Activated T-helper 2 cell treated with anti-CD3 and anti-CD28 coated beads, Interferon-gamma antibody, Interleukin-2, Interleukin-4, amounts not matched to agents 10 μg/mL and 5 μg/mL and 100 μg/mL, durations not matched to agents 14 hours and 24 hours and 36 hours (primary cell): ENCODE measurements at regions of chr3 and their contacts with region 1.

Region 1: GRCh38 chr3:100316641-100317069 is 17.9 kb upstream of the NIT2 start:
- DNase-seq: no peak
- H3K4me3 Mint-ChIP-seq: no peak overlapping the region
- H3K27ac Mint-ChIP-seq: peak overlapping the region; percentile 51
- H3K4me1 Mint-ChIP-seq: peaks cover 12% of the 10 kb centered on the region
- H3K27me3 Mint-ChIP-seq: no peaks in the 10 kb centered on the region

Region 2: DNA sequence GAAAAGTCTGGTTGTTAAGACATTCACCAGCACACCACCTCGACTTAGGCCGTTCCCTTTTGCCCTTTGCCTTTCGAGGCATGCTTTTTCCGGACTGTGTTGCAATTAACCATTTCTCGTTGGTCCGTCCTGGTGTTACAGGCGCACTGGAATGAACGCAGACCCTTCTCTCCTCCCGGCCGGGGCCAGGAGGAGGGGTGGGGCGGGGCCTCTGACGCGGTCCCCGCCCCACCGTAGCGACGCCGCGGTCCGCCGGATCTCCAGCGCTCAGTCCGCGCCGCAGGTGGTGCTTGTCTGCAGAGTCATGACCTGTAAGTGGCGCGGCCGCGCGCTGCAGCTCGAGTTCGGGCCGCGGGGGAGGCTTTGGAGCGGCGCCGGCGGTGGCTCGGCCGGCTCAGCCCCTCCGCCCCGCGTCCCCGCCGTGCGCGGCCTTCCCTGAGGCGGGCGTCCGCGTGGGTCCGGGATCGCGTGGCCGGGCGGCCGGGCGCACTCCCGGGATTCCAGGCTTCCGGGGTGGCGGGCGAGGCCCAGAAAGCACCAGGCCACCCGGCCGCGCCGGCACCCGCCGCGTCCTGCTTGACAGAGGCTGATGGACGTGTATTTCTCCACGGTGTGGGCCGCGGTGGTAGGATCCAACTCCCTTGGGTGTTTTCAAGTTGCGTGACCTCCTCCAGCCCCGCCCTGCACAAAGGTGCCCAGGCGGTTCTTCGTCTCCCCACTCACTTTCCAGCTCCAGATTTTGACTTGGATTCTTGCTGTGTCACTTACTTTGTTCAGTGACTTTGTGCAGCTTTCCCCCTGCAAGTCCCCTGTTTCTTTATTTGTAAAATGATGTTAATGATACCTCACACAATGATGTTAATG is 18.1 kb after region 1 on chr3 and contains the start of gene NIT2:
- intact Hi-C with region 1: loop called (anchors 2 kb)
- DNase-seq: peak; percentile 74
- H3K4me3 Mint-ChIP-seq: peak within 1 kb of the TSS; percentile 99
- H3K27ac Mint-ChIP-seq: peak within 1 kb of the TSS; percentile 99
- H3K4me1 Mint-ChIP-seq: peaks cover 18% of the 10 kb centered on the region
- H3K27me3 Mint-ChIP-seq: no peaks in the 10 kb centered on the region
- total RNA-seq, gene NIT2: 73.0 and 73.7 TPM in 2 replicates

Region 3: DNA sequence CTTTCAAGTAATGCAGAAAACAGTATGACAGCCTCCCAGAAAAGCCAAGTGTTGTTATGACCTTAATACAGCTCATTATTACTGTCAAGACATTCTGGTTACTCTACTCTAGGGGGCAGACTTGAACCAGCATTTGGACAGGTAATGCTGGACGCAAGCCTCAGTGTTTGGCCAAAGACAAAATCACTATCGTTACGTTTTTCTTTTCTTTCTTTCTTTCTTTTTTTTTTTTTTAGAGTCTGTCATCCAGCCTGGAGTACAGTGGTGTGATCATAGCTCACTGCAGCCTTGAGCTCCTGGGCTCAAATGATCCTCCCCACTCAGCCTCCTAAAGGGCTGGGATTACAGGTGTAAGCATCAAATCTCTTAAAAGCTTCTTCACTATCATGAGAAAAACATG is 146.3 kb after region 1 on chr3:
- intact Hi-C with region 1: loop called (anchors 5 kb)
- DNase-seq: no peak
- H3K4me3 Mint-ChIP-seq: no peak overlapping the region
- H3K27ac Mint-ChIP-seq: no peak overlapping the region
- H3K4me1 Mint-ChIP-seq: peaks cover 7% of the 10 kb centered on the region
- H3K27me3 Mint-ChIP-seq: peaks cover 2% of the 10 kb centered on the region

Region 4: DNA sequence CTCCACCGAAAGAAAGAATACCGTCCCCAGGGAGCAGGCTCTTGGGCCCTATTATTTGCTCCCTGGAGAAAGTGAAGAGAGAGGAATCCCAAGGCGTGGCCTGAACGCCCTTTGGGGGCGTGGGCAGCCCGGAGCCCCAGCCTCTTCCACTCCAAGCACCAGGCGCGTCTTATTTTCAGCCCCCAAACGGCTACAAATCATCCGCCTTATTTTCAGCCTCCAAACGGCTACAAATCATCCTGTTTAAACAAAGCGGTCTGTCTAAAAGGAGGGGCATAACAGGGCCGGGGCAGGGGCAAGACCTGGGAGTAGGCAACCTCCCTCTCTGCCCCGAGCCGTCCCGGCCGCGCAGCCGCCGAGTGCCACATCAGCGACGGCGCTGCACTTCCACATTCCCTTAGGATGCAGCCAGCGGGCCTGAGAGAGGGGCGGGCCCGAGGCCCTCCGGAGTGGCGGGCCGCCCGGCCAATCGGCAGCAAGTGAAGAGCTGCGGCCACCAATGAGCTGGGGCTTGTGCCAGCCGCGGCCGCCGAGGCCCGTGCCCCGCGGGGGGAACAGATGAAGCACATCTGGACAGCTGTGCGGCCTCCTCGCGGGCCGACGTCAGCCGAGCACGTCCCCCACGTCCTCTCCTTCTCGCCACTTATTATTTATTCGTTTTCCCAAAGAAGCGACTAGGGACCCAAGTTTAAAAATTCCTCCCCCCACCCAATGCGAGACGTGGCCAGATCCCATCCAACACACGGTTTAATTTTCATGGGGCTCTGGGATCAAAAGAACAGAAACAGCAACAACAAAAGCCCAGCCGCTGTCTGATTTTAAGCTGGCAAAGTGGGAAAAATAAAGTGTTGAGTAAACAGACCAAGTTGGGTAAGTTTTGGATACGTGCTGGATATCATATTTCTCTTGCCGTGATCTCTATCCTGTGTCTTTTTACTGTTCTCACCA is 175.7 kb after region 1 on chr3 and contains the start of gene TMEM45A:
- intact Hi-C with region 1: no loop called
- DNase-seq: peak; percentile 74
- H3K4me3 Mint-ChIP-seq: peak within 1 kb of the TSS; percentile 87
- H3K27ac Mint-ChIP-seq: peak within 1 kb of the TSS; percentile 58
- H3K4me1 Mint-ChIP-seq: peaks cover 8% of the 10 kb centered on the region
- H3K27me3 Mint-ChIP-seq: peaks cover 32% of the 10 kb centered on the region
- total RNA-seq, gene TMEM45A: 0.96 and 1.1 TPM in 2 replicates

Region 5: DNA sequence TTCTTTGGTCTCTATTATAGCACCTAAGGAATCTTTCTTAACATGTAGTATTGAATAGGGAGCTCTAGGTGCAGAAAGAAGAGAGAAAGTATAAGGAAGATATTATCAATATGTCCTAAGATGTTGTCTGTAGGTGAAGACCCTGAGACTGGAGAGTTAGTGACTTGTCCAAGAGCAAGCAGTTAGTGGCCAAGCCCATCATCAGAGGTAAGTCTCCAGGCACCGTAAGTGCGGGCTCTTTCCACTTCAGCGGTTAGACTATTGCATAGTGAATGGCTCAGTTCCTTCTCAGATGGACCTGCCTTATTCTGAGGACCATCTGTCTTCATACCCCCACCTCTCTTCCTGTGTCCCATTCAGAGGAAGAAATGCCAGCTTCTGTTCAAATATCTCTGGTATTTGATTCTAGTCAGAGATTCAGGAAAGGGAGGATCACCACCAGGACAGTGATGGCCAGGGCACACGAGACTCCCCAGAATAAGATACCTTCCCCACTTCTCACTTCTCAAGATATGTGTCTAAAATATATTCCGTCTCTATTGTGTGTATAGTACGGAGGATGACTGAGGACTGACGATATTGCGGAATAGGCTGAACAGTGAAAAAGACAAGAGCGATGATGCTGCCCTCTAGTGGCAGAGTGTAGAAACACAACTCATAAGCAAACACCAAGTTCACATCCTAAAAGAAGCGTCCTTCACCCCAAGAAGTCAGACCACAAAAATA is 273.6 kb after region 1 on chr3:
- intact Hi-C with region 1: loop called (anchors 1 kb)
- DNase-seq: peak; percentile 54
- H3K4me3 Mint-ChIP-seq: peak overlapping the region; percentile 1
- H3K27ac Mint-ChIP-seq: no peak overlapping the region
- H3K4me1 Mint-ChIP-seq: peaks cover 6% of the 10 kb centered on the region
- H3K27me3 Mint-ChIP-seq: peaks cover 7% of the 10 kb centered on the region

Region 6: DNA sequence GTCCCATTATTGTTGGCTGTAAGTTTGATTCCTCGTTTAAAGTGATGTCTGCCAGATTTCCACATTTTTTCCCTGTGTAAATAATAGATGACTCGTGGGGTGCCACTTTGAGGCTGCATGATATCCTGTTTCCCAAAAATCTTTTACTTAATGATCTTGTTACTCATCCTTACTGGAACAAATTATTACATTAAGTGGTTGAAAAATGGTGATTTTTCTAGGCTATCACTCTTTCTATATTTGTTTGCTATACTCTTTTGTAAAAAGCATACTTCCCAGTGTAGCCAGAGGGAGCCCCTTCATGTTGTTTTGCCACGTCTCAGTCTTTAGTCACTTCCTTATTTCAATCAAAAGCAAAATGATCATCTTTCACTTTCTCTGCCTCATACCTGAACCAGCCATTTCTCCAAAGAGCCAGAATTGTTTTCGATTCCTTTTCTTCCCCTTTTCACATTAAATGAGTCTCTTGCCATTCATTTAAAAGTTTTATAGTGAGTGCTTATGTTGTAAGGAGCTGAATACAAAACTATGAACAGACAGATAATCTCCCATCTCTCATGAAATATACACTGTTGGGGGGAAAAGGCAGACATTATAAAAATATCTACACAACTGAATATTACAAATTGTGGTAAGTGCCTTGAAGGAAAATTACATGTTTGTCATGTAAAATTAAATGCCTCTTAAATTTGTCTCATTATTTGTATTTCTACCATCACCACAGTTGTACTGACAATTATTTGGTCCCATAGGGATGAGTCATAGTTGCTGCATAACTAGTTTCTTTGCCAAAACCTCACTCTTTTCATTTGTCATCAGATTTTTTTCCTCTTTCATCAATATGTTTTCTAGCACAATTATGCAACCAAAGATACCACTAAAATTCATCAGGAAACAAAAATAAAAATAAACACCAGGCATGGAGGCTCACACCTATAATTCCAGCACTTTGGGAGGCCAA is 334.3 kb after region 1 on chr3:
- intact Hi-C with region 1: loop called (anchors 5 kb)
- DNase-seq: no peak
- H3K4me3 Mint-ChIP-seq: peak overlapping the region; percentile 5
- H3K27ac Mint-ChIP-seq: peak overlapping the region; percentile 38
- H3K4me1 Mint-ChIP-seq: peaks cover 14% of the 10 kb centered on the region
- H3K27me3 Mint-ChIP-seq: peaks cover 2% of the 10 kb centered on the region